Tibial artery (tissue), 4 donors: ENCODE measurements at regions of chr17 and their contacts with region 1.

Region 1: GRCh38 chr17:50297407-50297865 is 23.2 kb downstream of the TMEM92 start:
- DNase-seq: peak; percentile 77 to 85
- H3K4me3 ChIP-seq: no peak overlapping the region
- H3K27ac ChIP-seq: no peak overlapping the region
- H3K4me1 ChIP-seq: no peaks in the 10 kb centered on the region
- H3K27me3 ChIP-seq: no peaks in the 10 kb centered on the region
- CTCF ChIP-seq: peak; percentile 95 to 99

Region 2: GRCh38 chr17:50094753-50095619 is 202.4 kb before region 1 on chr17 and contains the start of gene PDK2:
- intact Hi-C with region 1: loop called (anchors 5 kb)
- DNase-seq: peak; percentile 96 to 98
- H3K4me3 ChIP-seq: peak within 1 kb of the TSS; percentile 77 to 89
- H3K27ac ChIP-seq: peak within 1 kb of the TSS; percentile 87 to 96
- H3K4me1 ChIP-seq: peaks cover 0 to 38% (median 25%) of the 10 kb centered on the region in 4 donors
- H3K27me3 ChIP-seq: no peaks in the 10 kb centered on the region
- CTCF ChIP-seq: no peak